Endothelial cell of umbilical vein (primary cell): ENCODE measurements at regions of chr10 and their contacts with region 1.

Region 1: GRCh38 chr10:67666416-67667034 is 29.5 kb downstream of the CTNNA3 start:
- DNase-seq: peak; percentile 61
- H3K4me3 ChIP-seq: no peak overlapping the region
- H3K27ac ChIP-seq: peak overlapping the region; percentile 30
- H3K4me1 ChIP-seq: peaks cover 17% of the 10 kb centered on the region
- H3K27me3 ChIP-seq: no peaks in the 10 kb centered on the region
- CTCF ChIP-seq: peak; percentile 17 to 36
- POLR2A ChIP-seq: no peak

Region 2: DNA sequence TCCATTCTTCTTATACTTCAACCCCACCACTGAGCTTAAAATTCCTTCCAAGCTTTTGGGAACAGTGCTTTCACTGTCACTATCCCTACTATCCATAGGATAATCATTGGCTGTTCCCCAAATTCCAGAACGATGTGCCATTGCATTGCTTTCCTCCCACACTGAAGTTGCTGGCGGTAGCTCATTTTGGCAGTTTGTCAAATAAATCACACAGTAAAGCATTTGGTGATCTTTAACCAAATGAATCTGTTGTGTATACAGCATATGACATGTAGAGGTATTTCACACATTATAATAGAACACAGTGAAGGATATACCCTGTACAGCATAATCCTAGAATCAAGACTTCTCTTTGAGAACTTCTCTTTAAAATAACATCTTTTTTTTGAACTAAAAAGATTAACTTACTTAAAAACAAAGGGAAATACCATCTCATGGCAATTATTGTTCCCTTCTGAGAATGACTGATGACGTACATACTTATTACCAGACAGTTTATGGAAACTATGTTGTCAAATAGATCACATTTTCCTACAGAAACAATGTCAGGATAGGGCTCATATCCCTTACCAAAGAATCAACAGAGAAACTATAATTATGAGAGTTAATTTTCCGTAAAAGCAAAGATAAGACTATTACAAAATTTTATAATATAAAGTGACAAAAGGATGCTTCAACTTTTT is 64.1 kb before region 1 on chr10:
- CTCF ChIA-PET with region 1: no interaction called
- POLR2A ChIA-PET with region 1: no interaction called
- dilution Hi-C with region 1: no loop called
- intact Hi-C with region 1: loop called (anchors 5 kb)
- DNase-seq: peak; percentile 86
- H3K4me3 ChIP-seq: no peak overlapping the region
- H3K27ac ChIP-seq: peak overlapping the region; percentile 14
- H3K4me1 ChIP-seq: peaks cover 17% of the 10 kb centered on the region
- H3K27me3 ChIP-seq: no peaks in the 10 kb centered on the region
- CTCF ChIP-seq: no peak
- POLR2A ChIP-seq: no peak

Region 3: GRCh38 chr10:67764012-67764822 is 97.7 kb after region 1 on chr10:
- CTCF ChIA-PET with region 1: interaction called, 6 read pairs
- POLR2A ChIA-PET with region 1: no interaction called
- dilution Hi-C with region 1: no loop called
- intact Hi-C with region 1: loop called (anchors 1 kb)
- DNase-seq: peak; percentile 98
- H3K4me3 ChIP-seq: peak overlapping the region; percentile 90 to 96 (median 92)
- H3K27ac ChIP-seq: peak overlapping the region; percentile 82
- H3K4me1 ChIP-seq: peaks cover 3% of the 10 kb centered on the region
- H3K27me3 ChIP-seq: peaks cover 3 to 5% of the 10 kb centered on the region in 2 experiments
- CTCF ChIP-seq: no peak
- POLR2A ChIP-seq: no peak